Pancreas (tissue), 10 donors: ENCODE measurements at regions of chrX and their contacts with region 1.

Region 1: DNA sequence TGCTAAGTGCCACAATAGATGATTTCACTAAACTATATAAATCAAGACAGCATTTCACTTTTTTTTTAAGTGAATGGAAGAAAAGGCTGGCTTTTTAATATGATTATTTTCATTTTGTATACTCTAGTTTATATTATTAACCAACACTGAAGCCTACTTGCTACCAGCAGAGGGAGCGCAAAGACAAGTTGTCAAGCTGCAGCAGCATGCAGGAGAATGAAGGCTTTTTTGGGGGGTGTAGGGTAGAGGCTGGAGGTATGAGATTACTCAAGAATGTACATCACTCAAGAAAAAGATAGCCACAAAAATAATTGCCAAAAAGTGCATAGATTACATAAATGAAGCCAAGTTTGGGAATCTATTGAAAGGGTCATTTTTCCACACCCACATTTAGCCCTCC is 519.5 kb downstream of the FGF13 start:
- DNase-seq: peak in 2 of 6 donors; percentile 10 to 15
- ATAC-seq: no peak
- H3K4me3 ChIP-seq: no peak overlapping the region
- H3K27ac ChIP-seq: no peak overlapping the region
- H3K4me1 ChIP-seq: no peaks in the 10 kb centered on the region
- H3K27me3 ChIP-seq: peaks cover 0 to 9% (median 3%) of the 10 kb centered on the region in 4 donors
- CTCF ChIP-seq: peak in 2 of 4 donors; percentile 18 to 23

Region 2: DNA sequence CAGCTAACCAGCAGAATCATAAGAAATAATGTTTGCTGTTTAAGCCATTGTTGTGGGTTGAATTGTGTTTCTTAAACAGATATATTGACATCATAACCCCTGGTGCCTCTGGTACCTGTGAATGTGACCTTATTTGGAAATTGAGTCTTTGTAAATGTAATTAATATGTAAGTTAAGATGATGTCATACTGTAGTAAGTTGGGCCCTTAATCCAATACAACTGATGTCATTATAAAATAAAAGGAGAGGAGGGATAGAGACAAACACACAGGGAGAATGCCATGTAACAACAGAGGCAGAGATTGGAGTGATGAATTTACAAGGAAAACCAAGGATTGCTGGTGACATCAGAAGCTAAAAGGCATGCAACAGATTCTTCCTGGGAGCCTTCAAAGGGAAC is 484.6 kb before region 1 on chrX:
- intact Hi-C with region 1: no loop called
- DNase-seq: no peak
- ATAC-seq: no peak
- H3K4me3 ChIP-seq: no peak overlapping the region
- H3K27ac ChIP-seq: no peak overlapping the region
- H3K4me1 ChIP-seq: no peaks in the 10 kb centered on the region
- H3K27me3 ChIP-seq: peaks cover 0 to 5% (median 0%) of the 10 kb centered on the region in 4 donors
- CTCF ChIP-seq: no peak

Region 3: GRCh38 chrX:138648568-138648967 is 456.6 kb after region 1 on chrX:
- intact Hi-C with region 1: no loop called
- DNase-seq: no peak
- ATAC-seq: no peak
- H3K4me3 ChIP-seq: no peak overlapping the region
- H3K27ac ChIP-seq: no peak overlapping the region
- H3K4me1 ChIP-seq: no peaks in the 10 kb centered on the region
- H3K27me3 ChIP-seq: no peaks in the 10 kb centered on the region
- CTCF ChIP-seq: no peak

Region 4: GRCh38 chrX:138745196-138745595 is 553.2 kb after region 1 on chrX:
- intact Hi-C with region 1: loop called in 1 of 3 experiments (anchors 10 kb)
- DNase-seq: peak in 2 of 6 donors; percentile 16 to 31
- ATAC-seq: peak in 3 of 4 donors; percentile 77 to 84 (median 82)
- H3K4me3 ChIP-seq: no peak overlapping the region
- H3K27ac ChIP-seq: no peak overlapping the region
- H3K4me1 ChIP-seq: no peaks in the 10 kb centered on the region
- H3K27me3 ChIP-seq: peaks cover 0 to 5% (median 2%) of the 10 kb centered on the region in 4 donors
- CTCF ChIP-seq: peak; percentile 65 to 90 (median 82)